ENCODE measurements at regions of chr6 and their contacts with region 1.

Region 1: GRCh38 chr6:150813319-150813992 is 52.0 kb upstream of the MTHFD1L start:
- DNase-seq: peak in 3 of 10 donors; percentile 10 to 61 (median 23)
- H3K4me3 ChIP-seq: no peak overlapping the region
- H3K27ac ChIP-seq: peak overlapping the region in 47 of 59 donors; percentile 3 to 84 (median 63)
- H3K27me3 ChIP-seq: no peaks in the 10 kb centered on the region
- CTCF ChIP-seq: no peak

Region 2: GRCh38 chr6:149580880-149581279 is 1232.6 kb before region 1 on chr6:
- intact Hi-C with region 1: no loop called
- DNase-seq: no peak
- H3K4me3 ChIP-seq: no peak overlapping the region
- H3K27ac ChIP-seq: no peak overlapping the region
- H3K27me3 ChIP-seq: no peaks in the 10 kb centered on the region
- CTCF ChIP-seq: no peak

Region 3: GRCh38 chr6:150079604-150080003 is 733.9 kb before region 1 on chr6:
- intact Hi-C with region 1: loop called (anchors 5 kb)
- DNase-seq: peak in 1 of 10 donors; percentile 38
- H3K4me3 ChIP-seq: peak overlapping the region in 34 of 59 donors; percentile 4 to 48 (median 28)
- H3K27ac ChIP-seq: peak overlapping the region in 9 of 59 donors; percentile 13 to 70 (median 42)
- H3K27me3 ChIP-seq: peaks cover 0 to 8% (median 0%) of the 10 kb centered on the region in 45 donors
- CTCF ChIP-seq: no peak

Region 4: DNA sequence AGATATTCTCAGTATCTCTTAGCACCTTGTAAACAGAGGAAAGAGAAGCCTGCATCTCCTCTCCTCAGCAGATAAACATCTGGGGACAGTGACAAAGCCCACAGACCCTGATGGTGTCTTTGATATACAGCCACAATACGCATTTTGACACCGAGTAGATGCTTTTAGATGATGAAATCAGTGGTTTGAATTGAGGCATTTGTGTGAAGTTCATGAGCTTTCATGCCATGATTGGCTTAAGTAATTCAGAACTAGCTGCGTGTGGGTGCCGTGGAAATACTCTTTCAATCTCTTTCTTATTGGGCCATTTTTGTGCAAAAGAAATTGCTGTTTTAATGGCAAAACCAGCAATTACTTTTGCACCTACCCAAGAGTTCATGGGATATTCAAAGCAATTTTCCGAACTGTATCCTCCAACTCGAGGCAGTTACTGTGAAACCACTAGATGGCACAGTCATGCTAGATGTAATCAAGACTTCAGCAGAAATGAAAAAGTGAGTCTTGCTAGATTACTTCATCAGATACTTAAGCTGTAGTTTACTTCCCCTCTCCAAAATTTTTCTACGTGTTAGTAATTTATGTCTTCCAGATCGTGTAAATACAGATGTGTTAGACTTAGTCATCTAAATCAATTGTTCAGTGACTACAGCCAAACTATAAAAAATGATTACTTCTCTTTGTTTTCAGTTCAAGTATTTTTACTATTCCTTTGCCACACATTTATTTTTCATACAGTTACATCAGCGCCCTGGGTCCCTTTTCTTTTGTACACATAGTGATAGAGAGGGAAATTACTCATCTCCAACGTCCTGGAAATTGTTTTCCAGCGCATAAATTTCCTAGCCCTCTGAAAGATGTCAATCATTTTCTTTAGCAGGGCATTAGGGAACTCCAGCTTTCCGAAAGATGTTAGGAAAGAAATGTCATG is 395.3 kb before region 1 on chr6:
- intact Hi-C with region 1: loop called (anchors 1 to 2 kb)
- DNase-seq: peak in 2 of 10 donors; percentile 20 to 40
- H3K4me3 ChIP-seq: peak overlapping the region; percentile 2 to 69 (median 48)
- H3K27ac ChIP-seq: peak overlapping the region in 28 of 59 donors; percentile 1 to 80 (median 58)
- H3K27me3 ChIP-seq: peaks cover 0 to 4% (median 0%) of the 10 kb centered on the region in 45 donors
- CTCF ChIP-seq: peak; percentile 56 to 93 (median 84)

Region 5: DNA sequence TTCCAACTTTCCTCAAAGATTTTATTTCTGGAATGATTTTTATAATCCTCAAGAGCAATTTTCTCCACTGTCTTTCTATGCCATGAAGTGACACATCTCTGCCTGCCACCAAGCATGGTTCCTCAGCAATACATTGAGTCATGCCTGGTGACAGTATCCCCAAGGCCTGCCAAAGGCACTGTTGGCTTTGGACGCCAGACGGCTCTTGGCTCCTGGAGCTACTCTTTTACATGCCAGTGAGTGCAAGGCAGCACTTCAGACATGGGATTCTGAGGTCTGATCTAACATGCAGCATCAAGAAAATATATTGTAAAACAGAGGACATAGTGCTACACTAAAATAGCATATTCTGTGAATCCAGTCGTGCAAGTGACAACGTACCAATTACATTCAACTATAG is 233.8 kb before region 1 on chr6:
- intact Hi-C with region 1: loop called in 1 of 2 experiments (anchors 10 kb)
- DNase-seq: peak in 9 of 10 donors; percentile 37 to 87 (median 72)
- H3K4me3 ChIP-seq: no peak overlapping the region
- H3K27ac ChIP-seq: peak overlapping the region in 23 of 59 donors; percentile 3 to 68 (median 40)
- H3K27me3 ChIP-seq: no peaks in the 10 kb centered on the region
- CTCF ChIP-seq: no peak

Region 6: GRCh38 chr6:150600301-150601017 is 213.0 kb before region 1 on chr6:
- intact Hi-C with region 1: loop called in 1 of 2 experiments (anchors 5 kb)
- DNase-seq: peak in 8 of 10 donors; percentile 40 to 68 (median 58)
- H3K4me3 ChIP-seq: peak overlapping the region; percentile 53 to 88 (median 77)
- H3K27ac ChIP-seq: peak overlapping the region in 58 of 59 donors; percentile 2 to 92 (median 80)
- H3K27me3 ChIP-seq: peaks cover 0 to 5% (median 0%) of the 10 kb centered on the region in 45 donors
- CTCF ChIP-seq: peak in 38 of 56 donors; percentile 2 to 55 (median 26)

Region 7: GRCh38 chr6:150667977-150668716 is 145.3 kb before region 1 on chr6:
- intact Hi-C with region 1: loop called in 1 of 2 experiments (anchors 10 kb)
- DNase-seq: peak in 8 of 10 donors; percentile 8 to 72 (median 59)
- H3K4me3 ChIP-seq: peak overlapping the region in 1 of 59 donors; percentile 12
- H3K27ac ChIP-seq: peak overlapping the region in 49 of 59 donors; percentile 12 to 84 (median 70)
- H3K27me3 ChIP-seq: no peaks in the 10 kb centered on the region
- CTCF ChIP-seq: peak in 11 of 56 donors; percentile 6 to 37 (median 16)